Lower leg skin (tissue), 4 donors: ENCODE measurements at regions of chr15 and their contacts with region 1.

Region 1: GRCh38 chr15:23860290-23861245 is 173.5 kb upstream of the NDN start:
- DNase-seq: no peak
- H3K4me3 ChIP-seq: no peak overlapping the region
- CTCF ChIP-seq: no peak
- POLR2A ChIP-seq: no peak

Region 2: DNA sequence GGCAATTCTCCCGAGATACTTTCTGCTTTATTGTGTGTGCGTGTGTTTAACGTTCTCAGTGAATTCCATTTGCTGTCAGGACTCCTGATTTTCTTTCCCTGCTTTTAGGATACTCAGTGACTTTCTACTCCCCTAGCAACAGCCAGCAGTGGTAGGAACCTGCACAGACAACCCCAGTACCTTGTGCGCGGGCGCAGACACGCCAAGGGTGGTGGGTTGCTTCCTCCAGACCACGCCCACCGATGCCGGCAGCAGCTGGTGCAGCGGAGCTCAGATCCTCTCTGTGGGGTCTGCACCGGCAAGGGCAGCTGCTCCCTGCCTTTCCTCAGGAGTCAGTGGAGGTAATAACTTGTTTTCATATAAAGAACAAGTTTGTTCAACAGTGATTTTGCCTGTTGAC is 51.6 kb after region 1 on chr15:
- intact Hi-C with region 1: loop called (anchors 2 kb)
- DNase-seq: no peak
- H3K4me3 ChIP-seq: no peak overlapping the region
- CTCF ChIP-seq: no peak
- POLR2A ChIP-seq: no peak